Left cardiac atrium (tissue), 4 donors: ENCODE measurements at regions of chr20 and their contacts with region 1.

Region 1: DNA sequence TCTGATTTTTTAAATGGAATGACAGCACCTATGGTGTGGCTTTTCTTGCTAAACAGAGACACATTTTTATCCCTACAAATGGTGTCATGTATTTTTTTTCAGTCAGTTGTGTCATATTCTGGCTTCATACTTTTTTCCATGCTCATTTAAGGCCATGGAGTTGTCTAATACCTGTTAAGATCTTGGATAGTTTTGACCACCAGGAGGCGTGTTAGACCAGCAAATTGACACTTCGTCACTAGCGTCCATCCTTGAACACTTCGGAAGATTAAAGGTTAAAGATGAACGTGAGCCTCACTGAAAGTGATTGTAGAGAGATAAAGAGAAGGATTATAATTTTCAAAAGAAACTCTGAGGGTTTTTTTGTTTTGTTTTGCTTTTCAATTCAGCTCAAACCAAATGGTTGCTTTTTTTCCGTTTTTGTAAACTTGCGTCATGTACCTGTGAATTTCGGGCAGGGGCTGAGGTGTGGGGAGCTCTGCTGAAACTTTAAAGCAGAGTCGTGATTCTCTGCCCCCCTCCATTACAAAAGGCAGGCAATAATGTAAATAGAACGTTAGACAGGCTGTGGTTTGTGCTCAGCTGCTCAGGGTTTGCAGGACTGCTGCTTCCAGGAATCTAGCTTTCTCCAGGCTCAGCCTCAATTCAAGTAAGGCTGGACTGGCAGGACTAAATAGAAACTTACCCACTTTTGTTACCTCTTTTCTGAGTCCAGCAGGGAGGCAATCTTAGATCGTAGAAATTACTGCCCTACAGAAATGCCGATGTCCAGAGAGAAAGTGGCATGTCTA is 245.1 kb downstream of the FOXA2 start:
- DNase-seq: no peak
- ATAC-seq: peak; percentile 41 to 82

Region 2: DNA sequence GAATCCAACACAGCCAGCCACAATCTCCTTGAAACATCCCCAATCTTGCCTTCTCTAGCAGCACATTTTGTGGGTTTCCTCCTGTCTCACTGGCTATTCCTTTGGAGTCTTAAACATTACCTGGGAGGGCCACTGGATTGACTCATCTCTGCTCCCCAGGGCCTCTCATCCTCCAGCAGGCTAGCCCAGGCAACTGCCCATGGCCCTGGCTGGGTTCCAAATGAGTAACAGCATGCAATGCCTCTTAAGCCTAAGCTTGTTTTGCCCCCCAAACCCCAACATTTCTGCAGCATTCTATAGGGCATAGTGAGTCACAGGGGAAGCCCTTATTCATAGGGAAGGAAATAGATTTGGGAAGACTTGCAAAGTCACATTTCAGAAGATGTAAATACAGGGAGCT is 40.2 kb after region 1 on chr20:
- intact Hi-C with region 1: no loop called
- DNase-seq: no peak
- ATAC-seq: no peak

Region 3: DNA sequence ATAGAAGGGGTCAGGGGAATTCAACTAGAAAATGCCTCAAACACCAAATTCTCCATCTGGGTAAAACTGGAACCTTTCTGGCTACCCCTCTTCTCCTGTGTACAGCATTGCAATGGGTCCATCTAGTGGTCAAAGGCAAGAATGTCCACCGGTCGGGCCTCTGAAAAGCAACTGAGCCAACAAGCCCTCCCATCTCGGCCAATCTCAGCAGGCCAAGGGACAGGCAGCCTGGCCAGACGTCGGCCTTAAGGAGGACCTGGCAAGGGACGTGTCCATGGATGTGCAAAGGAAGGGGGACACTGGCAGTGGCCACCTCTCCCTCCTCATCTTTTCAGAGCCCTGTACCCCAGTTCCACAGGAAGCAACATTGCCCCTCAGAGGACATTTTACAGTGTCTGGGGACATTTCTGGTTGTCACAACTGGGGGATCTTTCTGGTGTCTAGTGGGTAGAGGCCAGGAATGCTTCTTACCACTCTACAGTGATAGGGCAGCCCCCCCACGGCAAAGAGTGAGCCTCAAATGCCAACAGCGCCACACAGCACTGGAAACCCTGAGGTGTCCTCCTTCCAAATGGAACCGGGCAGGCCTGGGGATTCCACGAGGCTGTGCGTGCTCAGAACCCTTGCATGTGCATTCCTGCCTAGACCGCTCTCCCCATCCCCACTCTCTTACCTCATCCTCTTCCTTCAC is 344.9 kb after region 1 on chr20:
- intact Hi-C with region 1: loop called (anchors 2 to 5 kb)
- DNase-seq: peak; percentile 61
- ATAC-seq: peak; percentile 74 to 79